GM23248 (cell line): ENCODE measurements at regions of chr7 and their contacts with region 1.

Region 1: DNA sequence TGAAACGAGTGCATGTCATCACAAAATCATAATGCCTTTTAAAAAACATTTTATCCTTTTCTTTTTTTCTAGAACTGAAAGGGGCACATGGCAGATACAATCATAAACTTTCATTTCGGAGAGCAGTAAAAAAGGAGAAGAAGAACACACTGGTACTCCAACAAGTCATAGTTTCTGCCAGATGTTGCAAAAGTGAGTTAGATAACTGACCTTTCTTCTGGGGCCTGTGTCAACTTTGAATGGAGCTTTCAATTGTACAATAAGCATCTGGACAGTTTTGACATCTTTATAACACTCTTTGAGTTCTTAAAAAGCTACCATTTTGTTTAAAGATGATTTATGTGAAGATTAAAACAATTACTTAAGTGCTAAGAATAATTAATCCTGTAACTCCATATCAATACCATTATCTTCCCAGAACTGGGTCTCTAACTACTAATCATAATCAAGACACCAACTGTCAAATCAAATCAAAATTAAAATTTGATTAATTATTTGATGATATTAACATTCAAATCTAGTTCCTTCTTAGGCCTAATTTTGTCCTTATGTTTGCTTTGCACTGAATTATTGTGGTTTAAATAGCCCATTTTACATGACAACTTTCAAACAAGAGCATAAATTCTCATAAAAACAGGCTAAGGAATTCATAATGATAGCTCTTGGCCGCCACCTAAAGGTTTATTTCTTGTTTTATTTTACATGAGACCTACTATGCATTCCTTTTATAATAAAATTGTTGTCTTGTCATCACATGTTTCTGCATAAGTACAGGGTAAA is 19.5 kb upstream of the ITGB8 start:
- DNase-seq: peak; percentile 66
- H3K4me3 ChIP-seq: no peak overlapping the region
- H3K27ac ChIP-seq: no peak overlapping the region
- H3K4me1 ChIP-seq: peaks cover 8% of the 10 kb centered on the region; the same call in 1 of the 2 replicates
- H3K27me3 ChIP-seq: no peaks in the 10 kb centered on the region

Region 2: GRCh38 chr7:19964246-19964645 is 346.9 kb before region 1 on chr7:
- in situ Hi-C with region 1: loop called (anchors 10 kb)
- DNase-seq: peak; percentile 88
- H3K4me3 ChIP-seq: no peak overlapping the region
- H3K27ac ChIP-seq: peak overlapping the region; percentile 24; the same call in 1 of the 2 replicates
- H3K4me1 ChIP-seq: peaks cover 10% of the 10 kb centered on the region
- H3K27me3 ChIP-seq: no peaks in the 10 kb centered on the region

Region 3: GRCh38 chr7:20508109-20508508 is 197.0 kb after region 1 on chr7:
- in situ Hi-C with region 1: no loop called
- DNase-seq: peak; percentile 5
- H3K4me3 ChIP-seq: no peak overlapping the region
- H3K27ac ChIP-seq: no peak overlapping the region
- H3K4me1 ChIP-seq: no peaks in the 10 kb centered on the region
- H3K27me3 ChIP-seq: peaks cover 10% of the 10 kb centered on the region; the same call in 1 of the 2 replicates